Activated CD8-positive, alpha-beta T cell treated with anti-CD3 and anti-CD28 coated beads for 36 hours (primary cell): ENCODE measurements at regions of chr7 and their contacts with region 1.

Region 1: GRCh38 chr7:91835846-91836368 is 44.6 kb downstream of the MTERF1 start:
- DNase-seq: no peak
- ATAC-seq: no peak
- H3K4me3 Mint-ChIP-seq: no peak overlapping the region
- H3K27ac Mint-ChIP-seq: no peak overlapping the region
- H3K4me1 Mint-ChIP-seq: no peaks in the 10 kb centered on the region
- H3K27me3 Mint-ChIP-seq: no peaks in the 10 kb centered on the region
- CTCF ChIP-seq: no peak

Region 2: DNA sequence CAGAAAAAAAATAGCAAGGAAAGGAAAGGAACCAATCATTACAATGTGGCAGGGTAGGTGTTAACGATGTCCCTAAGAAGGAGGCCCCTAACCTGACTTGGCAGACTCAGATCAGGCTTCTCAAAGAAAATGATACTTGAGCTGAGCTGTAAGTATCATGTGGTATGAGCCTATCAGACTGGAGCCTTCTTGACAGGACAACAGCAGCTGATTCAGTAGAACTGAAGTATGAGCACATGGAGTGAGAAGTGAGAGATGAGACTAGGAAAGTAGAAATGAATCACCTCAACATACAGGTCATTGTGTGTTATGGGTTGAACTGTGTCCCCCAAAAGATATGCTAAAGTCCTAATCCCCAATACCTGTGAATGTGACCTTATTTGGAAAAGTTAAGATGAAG is 21.7 kb before region 1 on chr7:
- CTCF ChIA-PET with region 1: interaction called, 15 read pairs
- POLR2A ChIA-PET with region 1: no interaction called
- intact Hi-C with region 1: no loop called
- DNase-seq: no peak
- ATAC-seq: no peak
- H3K4me3 Mint-ChIP-seq: no peak overlapping the region
- H3K27ac Mint-ChIP-seq: no peak overlapping the region
- H3K4me1 Mint-ChIP-seq: no peaks in the 10 kb centered on the region
- H3K27me3 Mint-ChIP-seq: no peaks in the 10 kb centered on the region
- CTCF ChIP-seq: no peak

Region 3: DNA sequence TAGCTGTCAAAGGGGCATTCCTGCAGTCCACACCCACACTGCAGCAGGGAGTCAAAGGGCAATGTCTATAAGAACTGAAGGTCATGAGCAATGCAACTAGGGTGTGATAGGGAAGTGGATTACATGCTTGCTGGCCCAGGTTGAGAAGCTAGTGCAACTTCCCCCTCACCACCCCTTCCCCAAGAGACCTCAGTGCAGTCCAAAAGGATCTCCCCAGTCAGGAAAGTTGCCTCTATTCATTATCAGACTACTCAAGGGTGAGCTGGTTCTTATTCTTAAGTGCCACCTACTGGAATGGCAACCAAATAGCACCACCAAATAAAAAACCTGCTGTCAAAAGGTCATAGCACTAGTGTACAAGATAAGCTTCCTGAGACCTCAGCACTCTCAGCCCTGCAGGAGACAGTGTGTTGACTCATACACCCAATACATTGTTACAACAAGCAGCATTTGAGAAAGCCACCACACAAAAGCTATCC is 16.4 kb after region 1 on chr7:
- CTCF ChIA-PET with region 1: interaction called, 17 read pairs
- POLR2A ChIA-PET with region 1: interaction called, 3 read pairs
- intact Hi-C with region 1: no loop called
- DNase-seq: no peak
- ATAC-seq: peak; percentile 71
- H3K4me3 Mint-ChIP-seq: no peak overlapping the region
- H3K27ac Mint-ChIP-seq: no peak overlapping the region
- H3K4me1 Mint-ChIP-seq: peaks cover 2% of the 10 kb centered on the region
- H3K27me3 Mint-ChIP-seq: no peaks in the 10 kb centered on the region
- CTCF ChIP-seq: no peak

Region 4: DNA sequence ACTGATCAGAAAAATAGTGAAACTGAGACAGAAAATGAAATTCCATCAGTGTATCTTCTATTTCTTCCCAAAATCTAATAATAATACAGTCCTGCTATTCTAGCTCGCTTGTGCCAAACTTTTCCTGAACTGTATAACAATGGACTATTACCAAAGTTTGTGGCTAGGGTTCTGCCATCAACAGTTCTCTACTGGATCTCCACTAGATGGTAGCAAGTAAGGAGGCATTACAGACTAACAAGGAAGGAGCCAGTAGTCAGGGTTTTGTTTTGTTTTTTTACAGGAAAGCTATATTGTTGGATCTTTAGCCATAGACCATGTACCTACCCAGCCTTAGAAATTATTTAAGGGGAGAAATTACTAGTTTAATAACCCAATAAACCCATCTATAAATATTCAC is 33.8 kb after region 1 on chr7:
- CTCF ChIA-PET with region 1: no interaction called
- POLR2A ChIA-PET with region 1: no interaction called
- intact Hi-C with region 1: no loop called
- DNase-seq: no peak
- ATAC-seq: no peak
- H3K4me3 Mint-ChIP-seq: no peak overlapping the region
- H3K27ac Mint-ChIP-seq: no peak overlapping the region
- H3K4me1 Mint-ChIP-seq: peaks cover 6% of the 10 kb centered on the region
- H3K27me3 Mint-ChIP-seq: no peaks in the 10 kb centered on the region
- CTCF ChIP-seq: no peak